ENCODE measurements at regions of chr10 and their contacts with region 1.

Region 1: DNA sequence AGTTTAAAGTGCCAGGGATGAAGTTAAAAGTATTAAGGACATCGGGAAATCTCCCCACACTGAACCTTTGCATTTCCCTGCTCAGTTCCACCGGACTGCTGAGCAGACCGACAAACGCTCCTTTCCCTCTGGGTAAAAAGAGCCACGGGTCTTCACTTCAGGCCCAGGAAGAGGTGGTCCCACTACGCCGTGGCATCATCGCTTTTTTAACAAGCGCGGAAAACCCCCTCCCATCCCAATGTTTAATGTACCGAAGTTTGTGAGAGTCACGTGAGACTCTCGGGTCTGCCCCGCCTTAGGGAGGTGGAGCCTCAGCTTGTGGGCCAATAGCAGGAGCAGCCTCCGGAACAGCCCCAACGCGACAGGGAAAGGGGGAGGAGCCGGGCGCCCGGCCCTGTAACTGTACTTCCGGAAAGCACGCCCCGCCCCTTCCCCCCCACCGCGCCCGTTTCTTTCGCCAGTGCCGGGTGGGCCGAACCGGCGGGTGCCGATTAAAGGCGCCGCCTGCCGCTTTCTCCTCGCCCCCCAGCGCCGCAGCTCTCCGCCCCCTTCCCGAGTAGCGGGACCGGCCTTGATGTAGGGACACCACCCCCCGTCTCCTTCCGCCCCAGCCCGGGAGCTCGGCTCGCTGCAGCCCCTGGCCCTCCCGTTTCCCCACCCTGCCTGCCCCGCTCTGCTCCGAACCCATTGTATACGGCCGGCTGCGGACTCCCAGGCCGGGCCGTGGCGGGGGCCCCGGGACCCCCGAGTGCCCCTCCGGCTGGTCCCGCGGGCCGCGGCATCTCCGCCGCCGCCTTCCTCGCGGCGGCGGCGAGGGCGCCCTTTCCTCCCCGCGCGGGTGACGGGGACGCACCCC is 2.2 kb upstream of the TRIM8 start:
- DNase-seq: peak; percentile 95 to 98
- ATAC-seq: peak; percentile 69 to 91 (median 81)
- H3K4me3 ChIP-seq: peak overlapping the region; percentile 80
- H3K4me3 Mint-ChIP-seq: peak overlapping the region; percentile 96
- H3K27ac ChIP-seq: peak overlapping the region; percentile 95
- H3K27ac Mint-ChIP-seq: peak overlapping the region; percentile 92 to 97
- H3K4me1 ChIP-seq: peaks cover 26% of the 10 kb centered on the region
- H3K4me1 Mint-ChIP-seq: peaks cover 27 to 31% of the 10 kb centered on the region in 2 donors
- H3K27me3 ChIP-seq: no peaks in the 10 kb centered on the region
- H3K27me3 Mint-ChIP-seq: no peaks in the 10 kb centered on the region
- CTCF ChIP-seq: no peak

Region 2: GRCh38 chr10:102245101-102245931 is 396.8 kb before region 1 on chr10 and contains the start of gene GBF1:
- intact Hi-C with region 1: loop called (anchors 10 kb)
- DNase-seq: peak; percentile 88 to 97
- ATAC-seq: peak; percentile 80 to 94 (median 84)
- H3K4me3 ChIP-seq: peak within 1 kb of the TSS; percentile 94
- H3K4me3 Mint-ChIP-seq: peak within 1 kb of the TSS; percentile 98
- H3K27ac ChIP-seq: peak within 1 kb of the TSS; percentile 89
- H3K27ac Mint-ChIP-seq: peak within 1 kb of the TSS; percentile 98 to 99
- H3K4me1 ChIP-seq: peaks cover 31% of the 10 kb centered on the region
- H3K4me1 Mint-ChIP-seq: peaks cover 47 to 60% of the 10 kb centered on the region in 2 donors
- H3K27me3 ChIP-seq: peaks cover 15% of the 10 kb centered on the region
- H3K27me3 Mint-ChIP-seq: peaks cover 7 to 19% of the 10 kb centered on the region in 2 donors
- CTCF ChIP-seq: no peak
- total RNA-seq, gene GBF1: 48.2 to 52.5 (median 50.9) TPM

Region 3: DNA sequence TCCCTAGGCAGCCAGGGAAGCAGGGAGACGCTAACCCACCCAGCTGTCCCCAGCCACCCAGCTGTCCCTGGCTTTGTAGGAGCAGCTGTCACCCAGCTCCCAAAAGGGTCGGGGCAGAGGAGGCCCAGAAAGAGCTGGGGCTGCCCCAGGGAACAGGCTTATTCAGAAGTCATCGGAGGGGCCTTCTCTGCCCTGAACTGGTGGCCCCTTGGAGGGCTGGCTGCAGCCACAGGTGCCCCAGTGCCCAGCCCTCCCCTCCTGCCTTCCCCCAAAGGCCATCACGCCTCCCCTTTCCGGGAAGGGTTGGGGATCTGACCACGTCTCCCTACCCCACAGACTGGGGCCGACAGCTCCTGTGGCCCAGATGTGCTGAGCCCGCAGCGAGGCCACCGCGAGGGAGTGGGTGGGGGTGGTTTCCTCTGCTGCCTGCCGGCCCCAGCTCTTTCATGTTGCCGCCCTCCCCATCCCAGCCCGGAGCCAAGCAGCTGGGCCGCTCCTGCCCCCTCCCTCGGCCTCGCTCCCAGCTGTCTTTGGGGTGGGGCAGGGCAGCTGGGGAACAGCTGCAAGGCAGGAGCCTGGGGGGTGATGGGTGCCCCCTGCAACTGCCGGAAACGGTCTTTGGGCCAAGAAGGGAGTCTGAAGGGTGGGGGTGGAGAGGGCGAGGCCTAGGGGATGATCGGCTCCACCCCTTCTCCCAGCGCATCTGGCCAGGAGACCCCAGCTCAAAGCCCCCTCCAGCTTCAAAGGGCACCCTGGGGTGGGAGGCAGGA is 19.0 kb after region 1 on chr10:
- intact Hi-C with region 1: loop called (anchors 1 kb)
- DNase-seq: peak; percentile 57 to 76
- ATAC-seq: peak; percentile 86 to 92 (median 88)
- H3K4me3 ChIP-seq: peak overlapping the region; percentile 10
- H3K4me3 Mint-ChIP-seq: peak overlapping the region; percentile 75
- H3K27ac ChIP-seq: peak overlapping the region; percentile 65
- H3K27ac Mint-ChIP-seq: peak overlapping the region; percentile 74 to 89
- H3K4me1 ChIP-seq: peaks cover 39% of the 10 kb centered on the region
- H3K4me1 Mint-ChIP-seq: peaks cover 11 to 35% of the 10 kb centered on the region in 2 donors
- H3K27me3 ChIP-seq: no peaks in the 10 kb centered on the region
- H3K27me3 Mint-ChIP-seq: no peaks in the 10 kb centered on the region
- CTCF ChIP-seq: no peak

Region 4: GRCh38 chr10:102713814-102714620 is 71.9 kb after region 1 on chr10 and contains the start of gene ARL3:
- intact Hi-C with region 1: loop called (anchors 1 kb)
- DNase-seq: peak; percentile 82 to 97
- ATAC-seq: peak; percentile 92 to 98 (median 94)
- H3K4me3 ChIP-seq: peak within 1 kb of the TSS; percentile 99
- H3K4me3 Mint-ChIP-seq: peak within 1 kb of the TSS; percentile 82
- H3K27ac ChIP-seq: peak within 1 kb of the TSS; percentile 89
- H3K27ac Mint-ChIP-seq: peak within 1 kb of the TSS; percentile 79 to 96
- H3K4me1 ChIP-seq: peaks cover 15% of the 10 kb centered on the region
- H3K4me1 Mint-ChIP-seq: peaks cover 17 to 34% of the 10 kb centered on the region in 2 donors
- H3K27me3 ChIP-seq: no peaks in the 10 kb centered on the region
- H3K27me3 Mint-ChIP-seq: no peaks in the 10 kb centered on the region
- CTCF ChIP-seq: peak; percentile 67
- total RNA-seq, gene ARL3: 1.4 to 1.7 (median 1.5) TPM

Region 5: GRCh38 chr10:102917962-102918816 is 276.1 kb after region 1 on chr10 and contains the start of gene CNNM2:
- intact Hi-C with region 1: loop called (anchors 5 kb)
- DNase-seq: peak; percentile 99 to 100
- ATAC-seq: peak; percentile 88 to 96 (median 89)
- H3K4me3 ChIP-seq: peak within 1 kb of the TSS; percentile 97
- H3K4me3 Mint-ChIP-seq: peak within 1 kb of the TSS; percentile 94
- H3K27ac ChIP-seq: peak within 1 kb of the TSS; percentile 78
- H3K27ac Mint-ChIP-seq: peak within 1 kb of the TSS; percentile 94 to 98
- H3K4me1 ChIP-seq: peaks cover 27% of the 10 kb centered on the region
- H3K4me1 Mint-ChIP-seq: peaks cover 36 to 63% of the 10 kb centered on the region in 2 donors
- H3K27me3 ChIP-seq: no peaks in the 10 kb centered on the region
- H3K27me3 Mint-ChIP-seq: peaks cover 10 to 12% of the 10 kb centered on the region in 2 donors
- CTCF ChIP-seq: no peak
- total RNA-seq, gene CNNM2: 8.6 to 18.0 (median 16.7) TPM

Measured in natural killer cell (primary cell).